Endothelial cell of umbilical vein (primary cell): ENCODE measurements at regions of chr14 and their contacts with region 1.

Region 1: DNA sequence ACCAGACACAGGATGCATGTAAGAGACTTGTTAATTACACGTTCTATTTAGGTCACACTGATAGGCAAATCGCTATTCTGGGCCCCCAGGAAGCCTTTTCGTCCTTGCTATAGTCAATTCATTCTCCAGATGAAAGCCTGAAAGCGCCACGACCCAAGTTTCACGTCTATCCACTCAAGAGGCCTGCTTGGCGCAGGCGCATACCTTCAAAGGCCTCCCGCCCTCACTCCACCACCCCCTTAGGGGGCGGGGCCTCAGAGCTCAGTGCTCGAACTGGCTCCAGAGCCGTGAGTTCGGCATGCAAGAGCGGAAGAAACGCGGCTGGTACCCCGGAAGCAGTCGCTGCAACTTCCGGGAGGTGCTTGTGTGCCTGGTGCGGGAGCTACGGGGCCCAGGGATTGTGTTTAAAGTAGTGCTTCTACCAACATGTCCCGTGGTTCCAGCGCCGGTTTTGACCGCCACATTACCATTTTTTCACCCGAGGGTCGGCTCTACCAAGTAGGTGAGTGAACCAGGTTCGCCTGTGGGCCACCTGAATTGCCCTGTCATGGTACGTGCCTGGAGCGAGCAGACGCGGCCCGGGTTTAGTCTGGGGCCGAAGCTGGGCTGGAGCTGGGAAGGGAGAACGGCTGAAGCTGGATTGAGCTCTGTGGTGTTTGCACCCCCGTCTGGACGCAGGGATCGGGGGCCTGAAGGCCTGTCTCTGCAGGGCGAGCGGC is at the start of gene PSMA6:
- DNase-seq: peak; percentile 100
- H3K4me3 ChIP-seq: peak within 1 kb of the TSS; percentile 69 to 87 (median 87)
- H3K27ac ChIP-seq: peak within 1 kb of the TSS; percentile 77
- H3K4me1 ChIP-seq: peaks cover 16% of the 10 kb centered on the region
- H3K27me3 ChIP-seq: no peaks in the 10 kb centered on the region
- CTCF ChIP-seq: no peak
- POLR2A ChIP-seq: peak; percentile 81
- total RNA-seq, gene PSMA6: 195 and 197 TPM in 2 replicates

Region 2: DNA sequence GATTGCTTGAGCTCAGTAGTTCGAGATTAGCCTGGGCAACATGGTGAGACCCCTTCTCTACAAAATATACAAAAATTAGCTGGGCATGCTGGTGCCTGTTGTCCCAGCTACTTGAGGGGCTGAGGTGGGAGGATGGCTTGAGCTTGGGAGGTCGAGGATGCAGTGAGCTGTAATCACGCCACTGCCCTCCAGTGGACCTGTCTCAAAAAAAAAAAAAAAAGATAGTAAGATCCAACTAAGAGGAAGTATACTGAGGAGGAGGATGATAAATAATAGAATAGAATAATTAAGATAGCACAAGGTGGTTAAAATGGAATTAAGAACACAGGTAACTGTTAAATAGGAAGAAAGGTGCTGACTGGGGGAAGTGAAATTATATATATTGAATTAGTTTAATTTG is 380.0 kb before region 1 on chr14:
- CTCF ChIA-PET with region 1: no interaction called
- POLR2A ChIA-PET with region 1: no interaction called
- dilution Hi-C with region 1: no loop called
- intact Hi-C with region 1: no loop called
- DNase-seq: no peak
- H3K4me3 ChIP-seq: no peak overlapping the region
- H3K27ac ChIP-seq: no peak overlapping the region
- H3K4me1 ChIP-seq: peaks cover 2% of the 10 kb centered on the region
- H3K27me3 ChIP-seq: no peaks in the 10 kb centered on the region
- CTCF ChIP-seq: no peak
- POLR2A ChIP-seq: no peak

Region 3: DNA sequence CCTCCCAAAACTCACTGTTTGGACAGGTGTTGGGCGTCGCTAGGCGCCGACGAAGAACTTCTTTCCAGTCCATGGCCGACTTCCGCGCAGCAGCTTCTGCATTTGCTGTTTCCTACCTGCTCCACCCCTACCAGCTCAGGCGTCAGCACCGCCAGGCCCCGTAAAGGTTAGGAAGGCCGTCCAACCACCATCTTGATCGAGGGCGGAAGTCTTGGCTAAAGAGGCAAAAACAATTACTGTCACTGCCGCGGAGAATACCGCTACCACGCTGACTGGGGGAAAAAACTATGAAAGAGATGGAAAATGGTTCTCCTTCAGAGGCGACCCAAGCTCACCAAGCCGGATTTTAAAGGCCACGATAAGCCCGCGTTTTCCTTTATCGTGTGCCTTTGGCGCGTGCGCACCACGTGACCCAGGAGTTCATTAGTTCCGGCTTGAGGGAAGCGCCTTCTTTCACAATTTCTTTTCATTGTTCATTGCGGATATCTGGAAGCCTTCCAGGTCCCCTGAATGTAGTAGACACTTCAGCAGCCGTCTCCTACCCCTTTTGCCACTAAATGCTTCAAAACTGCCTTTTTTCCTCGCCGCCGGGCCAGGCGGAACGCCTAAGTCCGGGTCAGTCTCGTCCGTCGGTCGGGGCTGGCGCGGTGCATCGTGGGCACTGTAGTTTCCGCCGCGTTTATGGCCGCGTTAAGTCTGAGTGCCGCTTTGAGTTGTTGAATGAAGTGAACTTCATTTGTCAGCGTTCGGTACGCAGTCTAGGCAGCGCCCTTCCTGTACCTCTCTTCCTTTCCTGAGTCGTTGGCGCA is 170.1 kb before region 1 on chr14 and contains the starts of genes PPP2R3C and PRORP:
- CTCF ChIA-PET with region 1: no interaction called
- POLR2A ChIA-PET with region 1: interaction called, 5 read pairs
- dilution Hi-C with region 1: no loop called
- intact Hi-C with region 1: loop called (anchors 5 kb)
- DNase-seq: peak; percentile 95
- H3K4me3 ChIP-seq: peak within 1 kb of the TSS; percentile 81 to 96 (median 88)
- H3K27ac ChIP-seq: peak within 1 kb of the TSS; percentile 91
- H3K4me1 ChIP-seq: peaks cover 15% of the 10 kb centered on the region
- H3K27me3 ChIP-seq: no peaks in the 10 kb centered on the region
- CTCF ChIP-seq: no peak
- POLR2A ChIP-seq: no peak
- total RNA-seq, gene PPP2R3C: 40.6 and 46.0 TPM in 2 replicates
- total RNA-seq, gene PRORP: 36.3 and 36.9 TPM in 2 replicates

Region 4: GRCh38 chr14:35261774-35262173 is 30.4 kb before region 1 on chr14:
- CTCF ChIA-PET with region 1: interaction called, 10 read pairs
- POLR2A ChIA-PET with region 1: no interaction called
- dilution Hi-C with region 1: no loop called
- intact Hi-C with region 1: no loop called
- DNase-seq: peak; percentile 30
- H3K4me3 ChIP-seq: no peak overlapping the region
- H3K27ac ChIP-seq: no peak overlapping the region
- H3K4me1 ChIP-seq: peaks cover 8% of the 10 kb centered on the region
- H3K27me3 ChIP-seq: no peaks in the 10 kb centered on the region
- CTCF ChIP-seq: no peak
- POLR2A ChIP-seq: no peak

Region 5: GRCh38 chr14:35365130-35366055 is 73.2 kb after region 1 on chr14:
- CTCF ChIA-PET with region 1: no interaction called
- POLR2A ChIA-PET with region 1: interaction called, 3 read pairs
- dilution Hi-C with region 1: no loop called
- intact Hi-C with region 1: loop called (anchors 2 kb)
- DNase-seq: peak; percentile 84
- H3K4me3 ChIP-seq: no peak overlapping the region
- H3K27ac ChIP-seq: peak overlapping the region; percentile 31
- H3K4me1 ChIP-seq: peaks cover 27% of the 10 kb centered on the region
- H3K27me3 ChIP-seq: no peaks in the 10 kb centered on the region
- CTCF ChIP-seq: no peak
- POLR2A ChIP-seq: no peak

Region 6: GRCh38 chr14:35404449-35405303 is 112.5 kb after region 1 on chr14 and contains the start of gene NFKBIA:
- CTCF ChIA-PET with region 1: interaction called, 31 read pairs
- POLR2A ChIA-PET with region 1: interaction called, 16 read pairs
- dilution Hi-C with region 1: no loop called
- intact Hi-C with region 1: loop called (anchors 1 kb)
- DNase-seq: peak; percentile 90
- H3K4me3 ChIP-seq: peak within 1 kb of the TSS; percentile 74 to 89 (median 76)
- H3K27ac ChIP-seq: peak within 1 kb of the TSS; percentile 97
- H3K4me1 ChIP-seq: peaks cover 45% of the 10 kb centered on the region
- H3K27me3 ChIP-seq: no peaks in the 10 kb centered on the region
- CTCF ChIP-seq: peak; percentile 18 to 28
- POLR2A ChIP-seq: peak; percentile 90
- total RNA-seq, gene NFKBIA: 52.5 and 55.7 TPM in 2 replicates

Region 7: DNA sequence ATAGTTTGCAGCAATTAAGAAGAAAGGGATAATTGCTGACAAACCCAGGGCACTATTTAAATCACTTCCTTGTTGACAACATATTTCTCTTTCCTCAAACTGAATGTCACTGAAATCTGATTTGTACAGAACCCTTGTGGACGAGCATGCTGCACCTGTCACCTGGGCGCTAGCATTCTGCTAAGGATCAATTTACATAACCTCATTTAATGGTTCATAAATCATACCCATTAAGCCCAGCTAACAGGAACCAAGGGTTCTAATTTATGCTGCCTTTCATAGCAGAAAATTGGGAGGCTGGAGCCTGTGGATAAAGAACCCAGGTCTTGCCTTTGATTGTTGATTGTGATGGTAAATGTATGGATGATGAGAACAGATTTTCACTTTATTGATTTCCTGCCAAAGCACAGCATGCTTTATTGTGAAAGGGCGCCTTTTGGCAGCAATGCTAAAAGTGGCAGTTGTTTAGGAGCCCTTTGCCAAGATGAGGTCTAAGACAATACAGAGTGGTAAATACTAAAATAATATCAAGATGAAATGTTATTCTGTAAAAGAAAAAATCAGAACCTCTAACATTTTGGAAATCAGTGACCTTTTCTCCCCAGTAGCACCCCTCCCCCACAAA is 1132.4 kb after region 1 on chr14:
- CTCF ChIA-PET with region 1: no interaction called
- POLR2A ChIA-PET with region 1: no interaction called
- dilution Hi-C with region 1: no loop called
- intact Hi-C with region 1: no loop called
- DNase-seq: no peak
- H3K4me3 ChIP-seq: no peak overlapping the region
- H3K27ac ChIP-seq: no peak overlapping the region
- H3K4me1 ChIP-seq: no peaks in the 10 kb centered on the region
- H3K27me3 ChIP-seq: no peaks in the 10 kb centered on the region
- CTCF ChIP-seq: no peak
- POLR2A ChIP-seq: no peak